MCF 10A (cell line): ENCODE measurements at regions of chr10 and their contacts with region 1.

Region 1: GRCh38 chr10:88835096-88835909 is 16.3 kb downstream of the ANKRD22 start:
- DNase-seq: peak; percentile 89
- H3K4me3 Mint-ChIP-seq: no peak overlapping the region
- H3K27ac Mint-ChIP-seq: no peak overlapping the region
- H3K4me1 Mint-ChIP-seq: no peaks in the 10 kb centered on the region
- H3K27me3 Mint-ChIP-seq: no peaks in the 10 kb centered on the region
- CTCF ChIP-seq: peak; percentile 78

Region 2: GRCh38 chr10:87961046-87961713 is 874.1 kb before region 1 on chr10:
- CTCF ChIA-PET with region 1: no interaction called
- POLR2A ChIA-PET with region 1: no interaction called
- intact Hi-C with region 1: no loop called
- DNase-seq: peak; percentile 53
- H3K4me3 Mint-ChIP-seq: no peak overlapping the region
- H3K27ac Mint-ChIP-seq: peak overlapping the region; percentile 68
- H3K4me1 Mint-ChIP-seq: peaks cover 16% of the 10 kb centered on the region
- H3K27me3 Mint-ChIP-seq: no peaks in the 10 kb centered on the region
- CTCF ChIP-seq: no peak

Region 3: DNA sequence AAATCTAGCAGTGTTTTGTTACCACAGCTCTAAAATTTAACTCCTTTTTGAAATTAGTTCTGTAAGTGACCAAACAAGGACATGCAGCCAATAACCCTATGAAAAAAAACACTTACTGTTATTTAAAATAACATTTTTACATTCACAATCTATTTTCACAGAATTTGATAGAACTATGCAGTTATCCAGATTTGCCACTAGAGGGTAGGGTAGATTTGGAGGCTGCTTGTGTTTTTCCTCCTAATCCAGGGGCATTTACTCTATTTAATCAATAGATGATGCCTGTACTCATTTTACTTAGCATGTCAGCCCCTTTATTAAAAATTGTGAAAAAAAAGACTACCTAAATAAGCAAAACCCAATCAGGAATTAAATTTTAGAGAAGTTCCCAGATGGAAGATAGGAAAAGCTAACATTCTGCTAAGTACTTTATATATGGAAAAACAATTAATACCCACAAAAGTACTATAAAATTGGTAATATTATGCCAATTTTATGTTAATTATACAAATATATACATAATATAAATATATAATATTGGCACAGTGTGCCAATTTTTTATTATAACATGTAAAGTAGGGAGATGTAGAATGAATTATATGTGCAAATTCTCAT is 147.3 kb before region 1 on chr10:
- CTCF ChIA-PET with region 1: interaction called, 13 read pairs
- POLR2A ChIA-PET with region 1: no interaction called
- intact Hi-C with region 1: no loop called
- DNase-seq: peak; percentile 40
- H3K4me3 Mint-ChIP-seq: no peak overlapping the region
- H3K27ac Mint-ChIP-seq: no peak overlapping the region
- H3K4me1 Mint-ChIP-seq: no peaks in the 10 kb centered on the region
- H3K27me3 Mint-ChIP-seq: no peaks in the 10 kb centered on the region
- CTCF ChIP-seq: peak; percentile 75

Region 4: GRCh38 chr10:88858491-88858890 is 23.2 kb after region 1 on chr10:
- CTCF ChIA-PET with region 1: interaction called, 69 read pairs
- POLR2A ChIA-PET with region 1: interaction called, 6 read pairs
- intact Hi-C with region 1: no loop called
- DNase-seq: no peak
- H3K4me3 Mint-ChIP-seq: no peak overlapping the region
- H3K27ac Mint-ChIP-seq: no peak overlapping the region
- H3K4me1 Mint-ChIP-seq: peaks cover under 1% of the 10 kb centered on the region
- H3K27me3 Mint-ChIP-seq: no peaks in the 10 kb centered on the region
- CTCF ChIP-seq: no peak

Region 5: GRCh38 chr10:88886557-88886956 is 51.3 kb after region 1 on chr10:
- CTCF ChIA-PET with region 1: interaction called, 17 read pairs
- POLR2A ChIA-PET with region 1: interaction called, 36 read pairs
- intact Hi-C with region 1: no loop called
- DNase-seq: peak; percentile 25
- H3K4me3 Mint-ChIP-seq: no peak overlapping the region
- H3K27ac Mint-ChIP-seq: no peak overlapping the region
- H3K4me1 Mint-ChIP-seq: peaks cover 41% of the 10 kb centered on the region
- H3K27me3 Mint-ChIP-seq: no peaks in the 10 kb centered on the region
- CTCF ChIP-seq: no peak

Region 6: DNA sequence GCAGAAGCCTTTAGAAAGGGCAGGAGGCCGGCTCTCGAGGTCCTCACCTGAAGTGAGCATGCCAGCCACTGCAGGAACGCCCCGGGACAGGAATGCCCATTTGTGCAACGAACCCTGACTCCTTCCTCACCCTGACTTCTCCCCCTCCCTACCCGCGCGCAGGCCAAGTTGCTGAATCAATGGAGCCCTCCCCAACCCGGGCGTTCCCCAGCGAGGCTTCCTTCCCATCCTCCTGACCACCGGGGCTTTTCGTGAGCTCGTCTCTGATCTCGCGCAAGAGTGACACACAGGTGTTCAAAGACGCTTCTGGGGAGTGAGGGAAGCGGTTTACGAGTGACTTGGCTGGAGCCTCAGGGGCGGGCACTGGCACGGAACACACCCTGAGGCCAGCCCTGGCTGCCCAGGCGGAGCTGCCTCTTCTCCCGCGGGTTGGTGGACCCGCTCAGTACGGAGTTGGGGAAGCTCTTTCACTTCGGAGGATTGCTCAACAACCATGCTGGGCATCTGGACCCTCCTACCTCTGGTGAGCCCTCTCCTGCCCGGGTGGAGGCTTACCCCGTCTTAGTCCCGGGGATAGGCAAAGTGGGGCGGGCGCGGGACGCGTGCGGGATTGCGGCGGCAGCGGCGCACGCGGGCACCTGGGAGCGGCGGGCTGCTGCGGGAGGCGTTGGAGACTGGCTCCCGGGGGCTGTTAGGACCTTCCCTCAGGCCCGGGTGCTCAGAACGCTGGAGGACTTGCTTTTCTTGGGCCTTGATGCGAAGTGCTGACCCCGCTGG is 155.3 kb after region 1 on chr10 and contains the start of gene FAS:
- CTCF ChIA-PET with region 1: interaction called, 19 read pairs
- POLR2A ChIA-PET with region 1: interaction called, 8 read pairs
- intact Hi-C with region 1: loop called (anchors 1 kb)
- DNase-seq: peak; percentile 95
- H3K4me3 Mint-ChIP-seq: peak within 1 kb of the TSS; percentile 86
- H3K27ac Mint-ChIP-seq: peak within 1 kb of the TSS; percentile 93
- H3K4me1 Mint-ChIP-seq: peaks cover 23% of the 10 kb centered on the region
- H3K27me3 Mint-ChIP-seq: no peaks in the 10 kb centered on the region
- CTCF ChIP-seq: no peak
- total RNA-seq, gene FAS: 55.6 and 60.2 TPM in 2 replicates

Region 7: GRCh38 chr10:89959433-89960110 is 1124.3 kb after region 1 on chr10:
- CTCF ChIA-PET with region 1: no interaction called
- POLR2A ChIA-PET with region 1: no interaction called
- intact Hi-C with region 1: no loop called
- DNase-seq: no peak
- H3K4me3 Mint-ChIP-seq: no peak overlapping the region
- H3K27ac Mint-ChIP-seq: no peak overlapping the region
- H3K4me1 Mint-ChIP-seq: no peaks in the 10 kb centered on the region
- H3K27me3 Mint-ChIP-seq: no peaks in the 10 kb centered on the region
- CTCF ChIP-seq: no peak